Psoas muscle (tissue), 8 donors: ENCODE measurements at regions of chr17 and their contacts with region 1.

Region 1: DNA sequence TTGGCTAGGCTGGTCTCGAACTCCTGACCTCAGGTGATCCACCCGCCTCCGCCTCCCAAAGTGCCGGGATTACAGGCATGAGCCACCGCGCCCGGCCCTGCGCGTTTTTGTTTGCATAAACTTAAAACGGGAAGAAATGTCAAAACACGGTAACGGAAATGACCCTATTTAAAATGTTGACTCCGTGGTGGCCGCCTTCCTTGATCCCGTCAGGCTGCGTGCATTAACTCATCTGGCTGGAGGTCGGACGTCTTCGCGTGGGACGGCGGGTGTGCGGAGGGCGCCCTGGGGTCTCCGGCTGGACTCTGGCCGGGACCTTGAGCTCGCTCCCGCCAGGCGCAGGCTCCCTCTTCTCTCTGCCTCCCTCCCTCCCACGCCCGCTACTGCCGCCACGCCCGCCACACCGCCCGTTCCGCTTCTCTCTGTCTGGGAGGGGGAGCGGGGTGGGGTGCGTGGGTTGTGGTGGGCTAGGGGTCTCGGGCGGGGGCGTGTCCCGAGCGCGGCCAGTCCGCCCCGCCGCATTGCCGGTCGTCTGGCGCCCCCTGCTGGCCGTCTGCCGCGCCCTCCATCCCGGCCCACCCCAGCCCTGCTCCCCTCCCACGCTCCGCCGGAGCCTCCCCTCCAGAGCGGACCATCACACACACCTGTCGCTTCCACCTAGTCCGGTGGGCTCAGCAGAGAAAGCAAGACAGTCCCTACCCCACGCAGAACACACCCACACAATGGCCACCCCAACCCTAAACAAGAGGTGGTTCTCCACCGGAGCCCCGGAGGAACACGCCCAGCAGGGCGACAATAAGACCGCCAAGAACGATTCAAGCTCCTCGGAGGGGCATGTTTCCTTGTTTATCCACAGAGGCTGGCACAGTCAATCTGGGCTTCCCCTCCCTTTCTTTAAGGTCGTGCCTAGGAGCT is 1.2 kb upstream of the CCDC42 start:
- DNase-seq: peak; percentile 72 to 79
- ATAC-seq: peak; percentile 79 to 94 (median 84)
- H3K4me3 ChIP-seq: peak overlapping the region; percentile 71
- H3K27ac ChIP-seq: no peak overlapping the region
- H3K4me1 ChIP-seq: no peaks in the 10 kb centered on the region
- H3K27me3 ChIP-seq: peaks cover 0 to 29% (median 4%) of the 10 kb centered on the region in 3 donors
- CTCF ChIP-seq: peak; percentile 97

Region 2: DNA sequence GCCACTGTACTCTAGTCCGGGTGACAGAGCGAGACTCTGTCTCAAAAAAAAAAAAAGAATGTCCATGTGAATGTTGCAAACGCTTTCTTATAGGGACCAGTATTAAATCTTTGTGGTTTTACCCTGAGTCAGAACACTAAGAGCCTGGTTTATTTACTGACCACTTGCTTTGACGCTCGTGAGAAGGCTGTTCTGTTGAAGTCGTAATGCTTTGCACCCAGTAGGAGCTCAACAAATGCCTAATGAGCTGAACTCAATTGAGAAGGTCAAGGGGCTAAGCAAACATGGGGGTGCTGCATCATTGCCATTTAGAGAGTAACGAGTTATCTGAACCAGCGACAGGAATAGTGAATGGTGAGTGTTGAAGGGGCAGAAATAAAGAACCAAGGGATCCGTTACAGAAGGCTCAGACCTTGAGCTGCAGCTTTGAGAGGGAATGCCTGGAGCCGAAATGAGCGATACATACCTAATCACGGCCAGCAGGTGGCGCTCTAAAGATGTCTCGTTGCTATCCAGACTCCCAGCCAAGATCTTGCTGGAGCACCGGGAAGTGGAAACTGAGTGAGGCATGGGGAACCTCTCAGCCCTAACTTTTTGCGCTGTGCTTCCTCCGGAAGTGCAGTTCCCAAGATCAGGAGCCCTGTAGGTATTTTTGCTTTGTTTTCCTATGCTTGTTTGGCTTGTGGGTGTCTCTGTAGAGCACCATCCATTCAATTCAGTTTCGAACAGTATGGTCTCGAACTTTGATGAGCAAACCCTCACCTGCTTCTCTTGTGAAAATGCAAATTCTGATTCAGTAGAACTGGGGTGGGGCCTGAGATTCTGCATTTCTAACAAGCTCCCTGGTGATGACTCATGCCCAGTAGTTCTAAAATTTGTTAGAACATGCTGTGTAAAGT is 335.6 kb before region 1 on chr17:
- intact Hi-C with region 1: loop called (anchors 1 to 2 kb)
- DNase-seq: peak; percentile 83 to 92
- ATAC-seq: peak; percentile 87 to 93 (median 91)
- H3K4me3 ChIP-seq: no peak overlapping the region
- H3K27ac ChIP-seq: no peak overlapping the region
- H3K4me1 ChIP-seq: no peaks in the 10 kb centered on the region
- H3K27me3 ChIP-seq: no peaks in the 10 kb centered on the region
- CTCF ChIP-seq: peak; percentile 90

Region 3: DNA sequence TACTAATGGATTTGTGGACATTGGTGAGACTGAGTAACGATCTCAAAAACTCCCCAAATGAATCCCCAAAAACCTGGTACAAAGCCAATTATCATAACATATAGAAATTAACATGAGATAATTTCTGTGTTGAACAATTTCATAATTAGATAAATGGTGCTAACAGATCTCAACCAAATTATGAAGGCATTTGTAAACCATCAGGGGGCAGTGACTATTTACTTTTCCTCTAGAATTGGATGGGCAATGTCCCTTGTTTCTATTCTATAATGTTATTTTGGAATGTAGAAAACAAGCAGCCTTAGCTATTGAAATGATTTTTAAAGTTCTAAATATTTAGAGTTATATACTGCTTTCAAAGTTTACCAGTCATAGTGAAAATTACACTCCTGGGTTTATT is 173.1 kb before region 1 on chr17:
- intact Hi-C with region 1: loop called (anchors 5 to 10 kb)
- DNase-seq: no peak
- ATAC-seq: no peak
- H3K4me3 ChIP-seq: no peak overlapping the region
- H3K27ac ChIP-seq: no peak overlapping the region
- H3K4me1 ChIP-seq: no peaks in the 10 kb centered on the region
- H3K27me3 ChIP-seq: no peaks in the 10 kb centered on the region
- CTCF ChIP-seq: peak; percentile 23